CD8-positive, alpha-beta memory T cell (primary cell): ENCODE measurements at regions of chr21 and their contacts with region 1.

Region 1: GRCh38 chr21:17679002-17679600 is 66.4 kb upstream of the BTG3 start:
- DNase-seq: peak in 2 of 5 donors; percentile 58 to 59
- H3K4me3 ChIP-seq: no peak overlapping the region
- H3K4me3 Mint-ChIP-seq: no peak overlapping the region
- H3K27ac ChIP-seq: no peak overlapping the region
- H3K27ac Mint-ChIP-seq: no peak overlapping the region
- H3K4me1 ChIP-seq: no peaks in the 10 kb centered on the region
- H3K4me1 Mint-ChIP-seq: no peaks in the 10 kb centered on the region
- H3K27me3 ChIP-seq: no peaks in the 10 kb centered on the region
- H3K27me3 Mint-ChIP-seq: peaks cover 0 to 2% of the 10 kb centered on the region in 2 donors

Region 2: GRCh38 chr21:17688912-17689874 is 10.1 kb after region 1 on chr21:
- CTCF ChIA-PET with region 1: interaction called, 27 read pairs
- POLR2A ChIA-PET with region 1: no interaction called
- DNase-seq: peak; percentile 6 to 70 (median 36)
- H3K4me3 ChIP-seq: no peak overlapping the region
- H3K4me3 Mint-ChIP-seq: peak overlapping the region in 3 of 7 donors; percentile 6 to 50 (median 9)
- H3K27ac ChIP-seq: no peak overlapping the region
- H3K27ac Mint-ChIP-seq: peak overlapping the region in 6 of 8 donors; percentile 23 to 61 (median 54)
- H3K4me1 ChIP-seq: peaks cover 8% of the 10 kb centered on the region
- H3K4me1 Mint-ChIP-seq: peaks cover 20 to 52% (median 33%) of the 10 kb centered on the region in 3 donors
- H3K27me3 ChIP-seq: no peaks in the 10 kb centered on the region
- H3K27me3 Mint-ChIP-seq: peaks cover 0 to 5% of the 10 kb centered on the region in 2 donors

Region 3: GRCh38 chr21:17866590-17866989 is 187.5 kb after region 1 on chr21:
- CTCF ChIA-PET with region 1: no interaction called
- POLR2A ChIA-PET with region 1: no interaction called
- DNase-seq: no peak
- H3K4me3 ChIP-seq: no peak overlapping the region
- H3K4me3 Mint-ChIP-seq: no peak overlapping the region
- H3K27ac ChIP-seq: no peak overlapping the region
- H3K27ac Mint-ChIP-seq: no peak overlapping the region
- H3K4me1 ChIP-seq: no peaks in the 10 kb centered on the region
- H3K4me1 Mint-ChIP-seq: no peaks in the 10 kb centered on the region
- H3K27me3 ChIP-seq: no peaks in the 10 kb centered on the region
- H3K27me3 Mint-ChIP-seq: peaks cover 2 to 3% of the 10 kb centered on the region in 2 donors

Region 4: DNA sequence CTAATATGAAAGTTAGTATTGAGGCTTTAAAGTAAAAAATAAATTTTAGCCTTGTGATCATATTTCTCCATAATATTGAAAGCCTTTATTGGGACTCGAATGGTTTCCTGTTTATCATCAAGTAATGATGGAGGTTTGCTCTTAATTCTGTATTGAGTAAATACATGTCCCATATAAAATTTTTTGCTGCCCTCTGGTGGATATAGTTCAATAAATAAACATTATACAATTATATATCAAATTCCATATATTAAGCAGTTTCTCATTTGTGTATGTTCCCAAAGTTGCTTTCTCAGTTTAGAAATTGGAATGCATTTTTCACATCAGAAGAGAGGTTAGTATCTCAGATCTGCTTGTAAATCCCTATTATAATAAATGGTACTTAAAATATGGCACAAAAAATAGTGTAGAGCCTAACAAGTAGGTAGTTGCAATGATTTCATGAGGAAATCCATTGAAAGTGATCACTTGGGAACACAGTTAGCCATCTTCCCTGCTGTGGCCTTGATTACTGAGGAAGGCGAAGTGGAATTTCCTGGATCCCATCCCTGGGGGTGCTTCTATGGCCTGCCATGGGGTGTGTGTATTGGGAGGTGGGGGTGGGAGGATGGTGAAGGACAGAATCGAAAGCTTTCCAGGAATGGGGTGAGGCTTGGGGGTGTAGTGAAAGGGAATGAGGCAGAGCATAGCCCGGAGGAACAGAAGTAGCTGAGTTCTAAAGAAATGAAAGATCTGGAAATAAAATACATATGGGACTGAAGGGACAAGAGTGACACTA is 224.1 kb after region 1 on chr21:
- CTCF ChIA-PET with region 1: interaction called, 20 read pairs
- POLR2A ChIA-PET with region 1: no interaction called
- DNase-seq: peak in 2 of 5 donors; percentile 31 to 49
- H3K4me3 ChIP-seq: no peak overlapping the region
- H3K4me3 Mint-ChIP-seq: peak overlapping the region in 1 of 7 donors; percentile 25
- H3K27ac ChIP-seq: no peak overlapping the region
- H3K27ac Mint-ChIP-seq: peak overlapping the region in 1 of 8 donors; percentile 32
- H3K4me1 ChIP-seq: no peaks in the 10 kb centered on the region
- H3K4me1 Mint-ChIP-seq: peaks cover 0 to 21% (median 11%) of the 10 kb centered on the region in 3 donors
- H3K27me3 ChIP-seq: no peaks in the 10 kb centered on the region
- H3K27me3 Mint-ChIP-seq: peaks cover 0 to 4% of the 10 kb centered on the region in 2 donors

Region 5: DNA sequence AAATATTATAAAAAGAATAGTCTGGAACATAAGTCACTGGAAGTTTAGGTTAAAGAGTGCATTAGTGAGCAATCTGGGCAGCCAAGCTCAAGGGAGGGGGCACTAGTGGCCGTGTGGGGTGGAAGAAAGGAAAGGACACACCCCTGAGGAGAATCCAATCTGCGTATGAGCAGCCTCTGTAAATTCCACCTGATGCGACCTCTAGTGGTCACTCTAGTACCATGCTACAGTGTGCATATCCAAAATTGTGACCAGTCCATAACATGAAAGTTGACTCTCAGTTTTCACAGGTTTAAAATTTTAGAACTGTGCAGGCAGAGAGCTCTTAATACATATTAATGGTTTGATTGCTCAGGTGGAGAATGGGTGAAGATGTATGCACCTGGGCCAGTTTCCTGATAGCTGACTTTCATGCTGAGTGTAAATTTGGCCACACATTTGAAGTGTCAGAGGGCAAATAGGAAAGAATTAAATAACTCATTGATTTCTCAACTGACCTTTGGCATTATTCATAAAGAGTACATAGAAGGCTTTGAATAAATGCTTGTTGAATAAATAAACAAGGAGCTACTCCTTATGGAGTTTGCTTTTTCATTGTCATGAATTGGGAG is 246.0 kb after region 1 on chr21:
- CTCF ChIA-PET with region 1: interaction called, 46 read pairs
- POLR2A ChIA-PET with region 1: no interaction called
- DNase-seq: peak; percentile 14 to 61 (median 42)
- H3K4me3 ChIP-seq: no peak overlapping the region
- H3K4me3 Mint-ChIP-seq: no peak overlapping the region
- H3K27ac ChIP-seq: no peak overlapping the region
- H3K27ac Mint-ChIP-seq: no peak overlapping the region
- H3K4me1 ChIP-seq: no peaks in the 10 kb centered on the region
- H3K4me1 Mint-ChIP-seq: peaks cover 2 to 7% (median 4%) of the 10 kb centered on the region in 3 donors
- H3K27me3 ChIP-seq: no peaks in the 10 kb centered on the region
- H3K27me3 Mint-ChIP-seq: no peaks in the 10 kb centered on the region